Head of caudate nucleus (tissue), 42 donors: ENCODE measurements at regions of chr7 and their contacts with region 1.

Region 1: GRCh38 chr7:80288175-80289122 is 153.8 kb downstream of the GNAI1 start:
- DNase-seq: peak in 40 of 42 donors; percentile 9 to 82 (median 49)

Region 2: DNA sequence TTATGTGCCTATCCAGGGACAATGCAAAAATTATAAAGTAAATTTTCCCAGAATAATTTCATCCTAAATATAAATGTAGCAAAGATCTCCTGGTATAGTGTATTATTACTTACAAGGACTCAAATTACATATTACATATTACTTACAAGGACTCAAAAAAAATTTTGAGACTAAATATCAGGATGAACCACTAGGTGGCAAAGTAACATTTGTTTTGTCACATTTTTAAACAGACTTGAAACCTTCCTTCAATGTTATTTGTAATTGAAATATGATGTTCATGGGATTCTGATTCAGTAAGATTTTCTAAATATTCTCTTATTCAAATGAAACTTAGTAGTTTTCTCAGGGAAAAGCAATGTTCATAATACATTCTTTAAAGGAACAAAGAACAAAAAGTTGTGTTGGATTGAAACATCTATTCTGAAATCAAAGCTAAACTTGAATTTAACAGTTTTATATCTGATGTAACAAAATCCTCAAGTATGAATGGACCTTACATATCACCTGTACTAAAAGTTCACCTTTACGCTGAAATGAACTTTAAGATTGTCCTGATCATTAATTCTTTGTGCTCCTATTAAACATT is 228.1 kb before region 1 on chr7:
- intact Hi-C with region 1: loop called (anchors 5 kb)
- DNase-seq: peak in 1 of 42 donors; percentile 7

Region 3: GRCh38 chr7:80078159-80078731 is 210.2 kb before region 1 on chr7:
- intact Hi-C with region 1: no loop called
- DNase-seq: peak in 5 of 42 donors; percentile 3 to 45 (median 8)

Region 4: DNA sequence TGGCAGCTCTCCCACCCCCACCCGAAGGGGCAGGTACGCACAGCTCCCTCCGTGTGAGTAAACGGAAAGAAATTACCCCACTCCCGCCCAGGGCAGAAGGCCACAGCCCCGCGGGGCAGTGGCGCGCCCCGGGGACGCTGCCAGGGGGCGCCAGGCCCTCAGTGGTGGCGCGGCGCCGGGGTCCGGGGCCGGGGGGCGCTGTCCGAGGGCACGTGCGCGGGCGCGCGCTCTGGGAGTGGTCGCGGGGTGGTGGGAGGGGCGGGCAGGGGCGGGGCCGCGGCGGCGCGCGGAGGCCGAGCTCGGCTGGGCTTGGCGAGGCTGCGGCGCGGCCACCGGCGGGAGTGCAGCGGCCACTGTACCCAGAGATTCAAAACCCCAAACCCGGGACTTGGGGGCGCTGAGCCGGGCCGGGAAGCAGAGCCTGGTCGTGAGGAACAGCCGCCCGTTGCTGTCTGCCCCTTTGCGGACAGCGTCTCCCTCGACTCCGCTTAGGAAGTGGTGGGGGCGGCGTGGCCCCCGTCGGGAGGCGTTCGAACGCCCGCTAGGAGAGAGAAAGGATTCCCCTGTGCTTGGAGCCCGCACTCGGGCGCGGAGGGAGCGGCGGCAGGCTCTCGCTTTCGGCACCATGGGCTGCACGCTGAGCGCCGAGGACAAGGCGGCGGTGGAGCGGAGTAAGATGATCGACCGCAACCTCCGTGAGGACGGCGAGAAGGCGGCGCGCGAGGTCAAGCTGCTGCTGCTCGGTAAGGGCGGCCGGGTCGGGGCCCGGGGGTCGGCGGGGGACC is 153.7 kb before region 1 on chr7 and contains the start of gene GNAI1:
- intact Hi-C with region 1: loop called (anchors 2 kb)
- DNase-seq: peak; percentile 28 to 89 (median 72)